HEK293 (cell line): ENCODE measurements at regions of chr19 and their contacts with region 1.

Region 1: DNA sequence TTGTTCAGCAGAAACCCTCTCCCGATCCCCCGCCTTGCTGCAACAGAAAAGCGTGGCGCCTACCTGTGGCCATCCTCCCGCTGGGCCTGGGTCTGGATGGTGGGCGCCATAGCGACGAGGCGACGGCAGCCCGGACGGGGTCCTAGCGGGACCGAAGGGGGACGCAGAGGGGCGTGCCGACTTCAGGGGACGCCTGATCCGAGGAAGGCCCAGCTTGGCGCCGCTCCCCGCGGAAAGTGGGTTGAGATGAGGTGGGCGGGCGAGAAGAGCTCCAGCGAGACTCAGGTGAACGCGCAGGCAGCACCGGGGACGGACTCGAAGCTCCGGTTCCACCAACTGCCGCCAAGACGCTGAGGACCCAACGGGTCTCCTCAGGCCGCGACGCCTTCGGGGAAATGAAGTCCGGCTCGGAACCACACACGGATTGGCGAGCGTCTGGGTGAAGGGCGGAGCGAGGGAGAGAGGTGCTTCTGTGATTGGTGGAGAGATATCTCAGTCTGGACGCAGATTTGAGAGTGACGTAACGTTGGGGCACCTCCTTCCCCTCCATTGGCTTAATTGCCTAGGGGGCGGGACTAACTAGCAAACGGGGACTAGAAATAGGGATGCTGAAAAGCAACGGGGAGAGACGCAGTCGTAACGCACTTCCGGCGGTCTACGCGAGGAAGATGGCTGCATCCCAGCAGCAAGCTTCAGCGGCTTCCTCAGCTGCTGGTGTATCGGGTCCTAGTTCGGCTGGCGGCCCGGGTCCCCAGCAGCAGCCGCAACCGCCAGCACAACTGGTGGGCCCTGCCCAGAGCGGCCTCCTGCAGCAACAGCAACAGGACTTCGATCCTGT is at the starts of genes MED29 and PAF1:
- H3K4me3 ChIP-seq: peak within 1 kb of the TSS; percentile 68
- H3K27ac ChIP-seq: peak within 1 kb of the TSS; percentile 97
- H3K4me1 ChIP-seq: peaks cover 17% of the 10 kb centered on the region
- CTCF ChIP-seq: peak; percentile 100

Region 2: GRCh38 chr19:39341719-39342604 is 49.0 kb before region 1 on chr19 and contains the start of gene SAMD4B:
- CTCF ChIA-PET with region 1: interaction called, 8 read pairs
- POLR2A ChIA-PET with region 1: interaction called, 23 read pairs
- H3K4me3 ChIP-seq: peak within 1 kb of the TSS; percentile 67
- H3K27ac ChIP-seq: peak within 1 kb of the TSS; percentile 90
- H3K4me1 ChIP-seq: peaks cover 40% of the 10 kb centered on the region
- CTCF ChIP-seq: peak; percentile 98

Region 3: GRCh38 chr19:39362682-39363657 is 28.0 kb before region 1 on chr19:
- CTCF ChIA-PET with region 1: interaction called, 3 read pairs
- POLR2A ChIA-PET with region 1: interaction called, 13 read pairs
- H3K4me3 ChIP-seq: no peak overlapping the region
- H3K27ac ChIP-seq: peak overlapping the region; percentile 41; the same call in 1 of the 2 replicates
- H3K4me1 ChIP-seq: no peaks in the 10 kb centered on the region
- CTCF ChIP-seq: no peak

Region 4: DNA sequence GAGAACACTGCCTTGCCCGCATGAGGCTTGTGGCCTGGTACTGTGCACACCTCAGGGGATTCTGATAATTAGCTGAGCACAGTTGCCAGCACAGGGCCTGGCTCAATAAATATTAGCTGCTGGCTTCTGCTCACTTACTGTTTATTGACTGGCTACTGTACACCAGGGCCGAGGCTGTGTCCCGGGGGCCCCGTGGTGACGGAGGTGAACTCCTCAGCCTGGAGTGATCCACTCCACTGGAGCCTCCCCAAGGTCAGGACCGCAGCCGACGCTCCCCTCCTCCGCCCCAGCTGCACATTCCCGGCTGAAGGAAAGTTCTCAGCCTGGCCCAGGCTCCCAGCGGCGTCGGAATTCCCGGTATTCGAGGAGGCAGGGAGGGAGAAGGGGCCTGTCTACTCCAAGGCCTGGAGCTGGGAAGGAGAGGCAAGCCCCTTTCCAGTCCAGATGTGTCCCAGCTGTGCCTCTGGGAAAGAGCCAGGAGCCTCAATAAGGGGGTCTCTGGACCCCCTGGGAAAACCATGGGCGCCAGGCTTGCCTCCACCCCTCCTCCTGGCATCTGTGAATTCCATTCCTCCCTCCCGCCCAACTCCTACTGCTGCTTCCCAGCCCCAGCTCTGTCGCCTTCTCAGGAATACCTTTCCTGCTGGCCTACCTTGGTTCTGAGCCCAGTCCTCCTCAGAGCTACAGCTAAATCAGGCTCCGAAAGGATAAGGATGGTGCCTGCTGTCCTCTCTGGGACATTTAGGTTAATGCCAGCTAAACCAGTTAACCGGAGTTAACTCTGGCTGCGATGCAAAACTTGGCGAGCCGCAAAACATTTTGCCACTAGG is 37.5 kb after region 1 on chr19:
- CTCF ChIA-PET with region 1: interaction called, 3 read pairs
- POLR2A ChIA-PET with region 1: interaction called, 16 read pairs
- H3K4me3 ChIP-seq: no peak overlapping the region
- H3K27ac ChIP-seq: peak overlapping the region; percentile 40; the same call in 1 of the 2 replicates
- H3K4me1 ChIP-seq: peaks cover 10% of the 10 kb centered on the region
- CTCF ChIP-seq: no peak; the same call in 1 of the 2 replicates